ENCODE measurements at regions of chr3 and their contacts with region 1.

Region 1: GRCh38 chr3:62332835-62333244 is 40.5 kb downstream of the FEZF2 start:
- DNase-seq: peak in 2 of 7 donors; percentile 8 to 11
- H3K4me3 ChIP-seq: no peak overlapping the region
- H3K27ac ChIP-seq: no peak overlapping the region
- H3K4me1 ChIP-seq: no peaks in the 10 kb centered on the region
- H3K27me3 ChIP-seq: no peaks in the 10 kb centered on the region
- CTCF ChIP-seq: peak; percentile 27 to 75 (median 56)
- POLR2A ChIP-seq: no peak

Region 2: DNA sequence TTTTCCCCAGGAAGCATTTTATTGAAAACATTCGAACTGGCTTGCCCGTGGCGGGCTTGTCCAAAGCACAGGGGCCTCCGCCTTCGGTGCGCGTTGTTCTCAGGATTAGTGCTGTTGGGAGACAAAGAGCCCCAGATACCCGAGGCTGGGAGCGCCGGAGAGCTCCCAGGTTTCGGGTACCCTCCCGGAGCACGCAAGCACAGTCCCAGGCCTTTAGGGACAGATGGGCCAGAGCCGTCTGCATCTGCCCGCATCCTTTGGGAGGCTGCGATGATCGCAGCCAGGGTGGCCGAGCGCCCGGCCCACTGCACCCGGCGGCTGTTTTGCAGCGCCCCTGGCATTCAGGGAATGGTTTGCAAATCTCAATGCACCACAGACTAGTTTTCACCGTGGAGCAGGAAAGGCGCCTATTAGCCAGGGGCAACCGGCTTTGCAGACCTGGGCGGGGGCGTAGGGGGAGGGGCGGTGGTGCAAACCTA is 45.5 kb after region 1 on chr3:
- intact Hi-C with region 1: no loop called
- DNase-seq: no peak
- H3K4me3 ChIP-seq: no peak overlapping the region
- H3K27ac ChIP-seq: no peak overlapping the region
- H3K4me1 ChIP-seq: peaks cover 0 to 6% of the 10 kb centered on the region in 2 donors
- H3K27me3 ChIP-seq: peaks cover 78% of the 10 kb centered on the region
- CTCF ChIP-seq: no peak
- POLR2A ChIP-seq: no peak

Region 3: GRCh38 chr3:62554323-62554722 is 221.5 kb after region 1 on chr3:
- intact Hi-C with region 1: loop called in 1 of 2 experiments (anchors 5 kb)
- DNase-seq: no peak
- H3K4me3 ChIP-seq: no peak overlapping the region
- H3K27ac ChIP-seq: no peak overlapping the region
- H3K4me1 ChIP-seq: no peaks in the 10 kb centered on the region
- H3K27me3 ChIP-seq: peaks cover 7% of the 10 kb centered on the region
- CTCF ChIP-seq: no peak
- POLR2A ChIP-seq: no peak

Region 4: GRCh38 chr3:62559831-62560445 is 227.1 kb after region 1 on chr3:
- intact Hi-C with region 1: loop called in 1 of 2 experiments (anchors 10 kb)
- DNase-seq: no peak
- H3K4me3 ChIP-seq: no peak overlapping the region
- H3K27ac ChIP-seq: no peak overlapping the region
- H3K4me1 ChIP-seq: no peaks in the 10 kb centered on the region
- H3K27me3 ChIP-seq: no peaks in the 10 kb centered on the region
- CTCF ChIP-seq: peak in 4 of 6 experiments; percentile 28 to 56 (median 54)
- POLR2A ChIP-seq: no peak